Astrocyte of the cerebellum (primary cell): ENCODE measurements at regions of chr9 and their contacts with region 1.

Region 1: GRCh38 chr9:91443321-91443993 is 19.8 kb upstream of the NFIL3 start:
- DNase-seq: no peak
- H3K4me3 ChIP-seq: no peak overlapping the region
- CTCF ChIP-seq: no peak

Region 2: DNA sequence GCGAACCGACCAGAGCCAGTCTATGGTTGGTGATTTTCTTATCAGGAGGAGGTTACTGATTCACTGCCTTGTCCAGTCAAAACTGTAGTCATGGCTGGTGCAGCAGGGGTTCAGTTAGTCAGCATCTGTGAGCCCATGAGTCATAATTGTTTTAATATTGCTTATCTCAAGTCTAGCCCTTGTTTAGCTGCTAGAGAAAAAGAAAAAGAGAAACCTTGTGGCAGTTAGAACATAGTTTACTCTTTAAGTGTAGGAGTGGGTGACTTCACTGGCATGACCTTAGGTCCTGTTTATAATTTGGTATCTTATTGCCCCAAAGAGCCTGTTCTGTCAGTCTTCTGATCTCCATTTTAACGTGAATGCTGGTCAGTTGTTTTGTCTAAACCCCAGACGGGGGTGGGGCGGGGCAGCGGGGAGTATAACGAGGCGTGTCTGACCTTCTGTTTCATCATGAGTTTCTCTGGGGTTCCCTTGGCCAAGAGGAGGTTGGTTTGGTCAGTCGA is 57.1 kb after region 1 on chr9:
- in situ Hi-C with region 1: loop called (anchors 5 kb)
- DNase-seq: peak; percentile 69
- H3K4me3 ChIP-seq: no peak overlapping the region
- CTCF ChIP-seq: no peak